ENCODE measurements at regions of chr4 and their contacts with region 1.

Region 1: DNA sequence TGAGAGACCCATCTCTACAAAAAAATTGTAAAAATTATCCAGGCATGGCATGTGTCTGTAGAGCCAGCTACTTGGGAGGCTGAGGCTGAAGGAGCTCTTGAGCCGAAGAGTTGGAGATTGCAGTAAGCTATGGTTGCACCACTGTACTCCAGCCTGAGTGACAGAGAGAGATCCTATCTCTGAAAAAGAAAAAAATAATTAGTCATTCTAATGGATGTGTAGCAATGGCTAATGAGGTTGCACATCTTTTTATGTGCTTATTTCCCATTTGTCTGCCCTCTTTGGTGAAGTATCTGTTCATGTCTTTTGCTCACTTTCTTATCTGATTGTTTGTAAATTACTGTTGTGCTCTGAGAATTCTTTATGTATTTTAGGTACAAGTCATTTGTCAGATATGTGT is 19.0 kb upstream of the MAML3 start:
- DNase-seq: no peak
- H3K4me3 ChIP-seq: no peak overlapping the region
- H3K27ac ChIP-seq: no peak overlapping the region
- H3K4me1 ChIP-seq: no peaks in the 10 kb centered on the region
- CTCF ChIP-seq: no peak

Region 2: DNA sequence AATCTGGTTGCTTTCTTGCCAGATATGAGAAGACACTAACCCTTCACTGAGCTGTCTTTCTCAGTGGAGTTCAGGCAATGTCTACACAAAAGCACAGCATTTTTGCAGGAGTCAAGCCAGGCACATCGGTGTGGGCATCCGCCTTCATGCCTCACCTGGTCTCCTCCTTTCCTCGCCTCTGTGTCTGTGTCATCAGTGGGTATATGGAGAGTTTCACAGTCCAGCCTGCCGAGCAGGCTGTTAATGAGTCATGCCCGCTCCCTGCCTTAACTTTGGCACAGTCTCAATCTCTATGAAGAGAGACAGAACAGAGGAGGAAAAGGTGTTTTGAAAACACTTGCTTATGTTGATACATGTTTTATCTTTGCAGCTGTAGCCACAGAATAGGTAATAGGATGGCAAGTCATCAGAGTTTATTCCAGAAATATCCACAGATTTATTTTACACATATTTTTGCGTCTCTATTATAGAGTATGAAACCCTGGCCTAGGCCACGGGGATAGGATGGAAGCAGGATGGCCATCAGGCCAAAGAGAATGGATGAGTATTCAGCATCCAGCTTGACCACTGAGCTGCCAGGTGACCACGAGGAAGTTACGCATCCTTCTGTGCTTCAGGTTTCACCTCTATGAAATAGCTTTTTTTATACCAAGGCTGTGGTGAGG is 13.8 kb after region 1 on chr4:
- CTCF ChIA-PET with region 1: no interaction called
- POLR2A ChIA-PET with region 1: interaction called, 12 read pairs
- intact Hi-C with region 1: no loop called
- DNase-seq: no peak
- H3K4me3 ChIP-seq: no peak overlapping the region
- H3K27ac ChIP-seq: no peak overlapping the region
- H3K4me1 ChIP-seq: no peaks in the 10 kb centered on the region
- CTCF ChIP-seq: no peak